GM23248 (cell line): ENCODE measurements at regions of chr20 and their contacts with region 1.

Region 1: DNA sequence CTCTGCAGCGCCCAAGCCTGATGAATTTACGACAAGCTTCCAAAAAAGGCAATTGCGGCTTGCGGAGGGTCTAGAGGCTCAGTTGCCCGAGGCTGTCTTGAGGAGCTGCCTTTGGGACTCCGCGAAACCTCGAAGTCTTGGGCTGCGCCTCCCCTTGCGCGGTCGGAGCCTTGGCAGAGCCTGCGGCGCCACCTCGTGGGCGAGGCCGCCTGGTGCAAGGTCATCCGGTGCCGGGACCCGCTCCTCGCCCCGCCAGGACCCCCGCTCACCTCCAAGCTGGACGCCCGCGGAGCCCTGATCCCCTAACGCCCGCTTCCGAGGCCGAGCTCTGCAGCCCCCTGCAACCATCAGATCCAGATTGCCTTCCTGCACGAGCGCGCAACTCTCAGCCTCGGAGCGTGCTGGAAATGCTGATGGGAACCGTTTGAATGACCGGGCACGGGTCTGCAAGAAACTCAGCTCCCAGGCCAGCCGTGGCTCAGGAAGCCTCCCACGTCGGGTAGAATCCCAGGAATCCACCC is 14.9 kb upstream of the FAM210B start:
- DNase-seq: peak; percentile 75
- H3K4me3 ChIP-seq: peak overlapping the region; percentile 61
- H3K27ac ChIP-seq: no peak overlapping the region
- H3K4me1 ChIP-seq: no peaks in the 10 kb centered on the region
- H3K27me3 ChIP-seq: peaks cover 33% of the 10 kb centered on the region

Region 2: GRCh38 chr20:56257604-56258003 is 86.3 kb before region 1 on chr20:
- in situ Hi-C with region 1: loop called (anchors 10 kb)
- DNase-seq: no peak
- H3K4me3 ChIP-seq: no peak overlapping the region
- H3K27ac ChIP-seq: no peak overlapping the region
- H3K4me1 ChIP-seq: no peaks in the 10 kb centered on the region
- H3K27me3 ChIP-seq: peaks cover 8% of the 10 kb centered on the region

Region 3: DNA sequence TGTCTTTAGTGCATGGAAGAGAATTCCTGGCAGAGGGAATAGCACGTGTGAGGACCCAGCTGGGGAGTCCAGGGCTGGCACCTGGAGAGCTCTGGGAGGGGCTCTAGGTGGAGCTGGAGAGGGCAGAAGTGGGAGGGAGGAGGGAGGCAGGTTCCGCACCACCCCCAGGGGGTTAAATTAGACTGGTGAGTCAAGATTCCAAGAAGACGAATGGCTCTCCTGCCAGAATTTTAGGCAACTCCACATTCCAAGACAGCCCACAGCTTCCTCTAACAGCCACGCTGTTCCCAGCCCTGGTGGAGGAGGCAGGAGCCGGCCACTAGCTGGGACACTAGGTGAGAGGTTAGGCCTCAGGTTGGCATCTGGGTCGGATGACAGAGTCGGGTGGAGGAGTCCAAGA is 345.4 kb after region 1 on chr20:
- in situ Hi-C with region 1: no loop called
- DNase-seq: peak; percentile 93
- H3K4me3 ChIP-seq: no peak overlapping the region
- H3K27ac ChIP-seq: peak overlapping the region; percentile 31
- H3K4me1 ChIP-seq: peaks cover 20% of the 10 kb centered on the region
- H3K27me3 ChIP-seq: no peaks in the 10 kb centered on the region

Region 4: DNA sequence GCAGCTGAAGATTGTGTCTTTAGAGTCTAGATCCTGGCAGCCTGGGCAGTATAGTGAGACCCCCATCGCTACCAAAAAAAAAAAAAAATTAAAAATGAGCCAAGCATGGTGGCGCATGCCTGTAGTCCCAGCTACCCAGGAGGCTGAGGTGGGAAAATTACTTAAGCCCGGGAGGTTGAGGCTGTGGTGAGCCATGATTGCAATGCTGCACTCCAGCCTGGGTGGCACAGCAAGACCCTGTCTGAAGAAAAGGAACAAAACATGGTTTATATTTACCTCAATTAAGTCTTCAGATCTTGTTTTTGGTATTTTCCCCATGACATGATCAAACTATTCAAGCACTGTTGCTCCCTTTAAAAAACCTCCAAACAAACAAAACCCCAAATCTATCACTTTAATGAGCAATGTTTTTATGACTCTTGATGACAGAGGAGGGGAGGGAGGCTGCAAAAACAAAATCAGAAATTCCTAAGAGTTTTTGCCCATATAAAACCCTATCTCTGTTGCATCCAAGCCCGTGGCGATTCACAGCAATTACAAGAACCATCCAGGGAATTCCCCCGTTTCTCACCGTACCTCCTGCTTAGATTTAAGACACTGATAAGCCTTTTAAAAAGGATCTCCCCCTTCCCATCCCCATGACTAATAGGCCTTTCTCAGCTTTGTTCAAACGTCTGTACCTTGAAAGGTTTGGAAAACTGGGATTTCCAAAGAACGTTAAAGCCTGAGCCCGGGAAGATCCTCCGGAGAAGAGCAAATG is 662.7 kb after region 1 on chr20:
- in situ Hi-C with region 1: no loop called
- DNase-seq: peak; percentile 30
- H3K4me3 ChIP-seq: peak overlapping the region; percentile 29; the same call in 1 of the 2 replicates
- H3K27ac ChIP-seq: no peak overlapping the region
- H3K4me1 ChIP-seq: peaks cover 10% of the 10 kb centered on the region
- H3K27me3 ChIP-seq: peaks cover 41% of the 10 kb centered on the region